BJ (cell line): ENCODE measurements at regions of chr15 and their contacts with region 1.

Region 1: GRCh38 chr15:39472621-39473297 is 108.1 kb upstream of the THBS1 start:
- DNase-seq: peak; percentile 100
- H3K4me3 ChIP-seq: no peak overlapping the region
- H3K27me3 ChIP-seq: no peaks in the 10 kb centered on the region
- CTCF ChIP-seq: no peak

Region 2: DNA sequence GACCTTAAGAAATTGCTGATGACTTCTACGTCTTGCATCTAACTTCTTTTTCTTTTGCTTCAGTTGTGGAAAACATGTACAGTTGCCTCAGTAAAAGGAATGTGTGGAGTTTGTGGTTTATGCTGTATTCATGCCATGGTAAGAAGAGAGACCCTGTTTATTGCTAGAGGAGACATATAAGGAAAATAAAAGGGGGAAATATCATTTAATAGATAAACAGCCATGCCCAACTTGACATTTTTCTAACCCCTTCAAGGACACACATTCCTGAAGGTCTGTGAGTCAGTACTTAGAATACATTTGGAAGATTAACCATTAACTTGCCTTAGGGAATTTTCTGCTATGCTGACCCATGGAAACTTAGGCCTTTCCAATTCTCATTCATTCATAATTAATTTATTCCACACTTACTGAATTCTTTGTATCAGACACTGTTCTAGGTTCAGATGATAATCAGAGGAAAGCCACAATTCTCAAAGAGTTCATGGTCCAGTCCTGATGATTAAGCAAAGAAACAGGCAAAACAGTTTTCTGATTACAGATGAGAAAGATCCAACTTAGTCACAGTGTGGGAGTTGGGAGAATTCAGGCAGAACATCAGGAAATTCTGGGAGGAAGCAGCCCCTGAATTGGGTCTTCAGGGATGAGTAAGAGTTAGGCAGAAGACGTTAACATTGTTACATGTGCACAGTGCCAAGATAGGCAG is 578.4 kb before region 1 on chr15:
- CTCF ChIA-PET with region 1: no interaction called
- POLR2A ChIA-PET with region 1: interaction called, 10 read pairs
- DNase-seq: peak; percentile 87
- H3K4me3 ChIP-seq: no peak overlapping the region
- H3K27me3 ChIP-seq: no peaks in the 10 kb centered on the region
- CTCF ChIP-seq: no peak

Region 3: GRCh38 chr15:39404767-39405181 is 68.0 kb before region 1 on chr15:
- CTCF ChIA-PET with region 1: no interaction called
- POLR2A ChIA-PET with region 1: interaction called, 12 read pairs
- DNase-seq: peak; percentile 99
- H3K4me3 ChIP-seq: no peak overlapping the region
- H3K27me3 ChIP-seq: no peaks in the 10 kb centered on the region
- CTCF ChIP-seq: no peak

Region 4: GRCh38 chr15:39896846-39897245 is 424.1 kb after region 1 on chr15:
- CTCF ChIA-PET with region 1: no interaction called
- POLR2A ChIA-PET with region 1: no interaction called
- DNase-seq: no peak
- H3K4me3 ChIP-seq: no peak overlapping the region
- H3K27me3 ChIP-seq: no peaks in the 10 kb centered on the region
- CTCF ChIP-seq: no peak